Naive thymus-derived CD4-positive, alpha-beta T cell (primary cell): ENCODE measurements at regions of chr19 and their contacts with region 1.

Region 1: DNA sequence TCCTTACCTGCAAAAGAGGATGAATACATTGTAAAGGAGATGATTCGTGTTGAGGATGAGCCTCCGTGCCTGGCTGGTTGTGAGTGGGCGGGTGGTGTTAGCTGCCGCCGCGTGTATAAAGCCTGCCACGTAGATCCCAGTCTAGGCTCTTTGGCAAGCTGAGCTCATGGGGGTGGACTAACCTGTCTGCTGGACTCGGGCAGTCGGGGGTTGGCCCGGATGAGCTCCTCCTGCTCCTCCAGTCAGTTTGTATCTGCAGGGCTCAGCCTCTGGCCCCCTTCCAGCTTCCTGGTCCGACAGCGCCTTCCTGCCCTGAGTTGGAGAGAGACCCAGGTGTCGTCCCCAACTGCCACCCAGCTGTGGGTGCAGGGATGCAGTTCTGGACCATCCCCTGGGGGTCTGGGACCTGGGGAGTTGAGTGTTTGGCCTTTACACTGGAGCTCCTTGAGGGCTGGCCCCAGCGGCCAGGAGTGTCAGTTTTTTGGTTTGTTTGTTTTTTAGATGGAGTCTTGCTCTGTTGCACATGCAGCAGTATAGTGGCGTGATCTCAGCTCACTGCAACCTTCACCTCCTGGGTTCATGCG is 20.9 kb downstream of the TECR start:
- DNase-seq: no peak
- ATAC-seq: no peak
- H3K4me3 ChIP-seq: no peak overlapping the region
- H3K4me3 Mint-ChIP-seq: peak overlapping the region in 5 of 10 donors; percentile 8 to 76 (median 36)
- H3K27ac ChIP-seq: no peak overlapping the region
- H3K27ac Mint-ChIP-seq: peak overlapping the region; percentile 64 to 97 (median 84)
- H3K4me1 ChIP-seq: peaks cover 16 to 39% of the 10 kb centered on the region in 2 donors
- H3K4me1 Mint-ChIP-seq: peaks cover 28 to 70% (median 57%) of the 10 kb centered on the region in 7 donors
- H3K27me3 ChIP-seq: no peaks in the 10 kb centered on the region
- H3K27me3 Mint-ChIP-seq: no peaks in the 10 kb centered on the region

Region 2: DNA sequence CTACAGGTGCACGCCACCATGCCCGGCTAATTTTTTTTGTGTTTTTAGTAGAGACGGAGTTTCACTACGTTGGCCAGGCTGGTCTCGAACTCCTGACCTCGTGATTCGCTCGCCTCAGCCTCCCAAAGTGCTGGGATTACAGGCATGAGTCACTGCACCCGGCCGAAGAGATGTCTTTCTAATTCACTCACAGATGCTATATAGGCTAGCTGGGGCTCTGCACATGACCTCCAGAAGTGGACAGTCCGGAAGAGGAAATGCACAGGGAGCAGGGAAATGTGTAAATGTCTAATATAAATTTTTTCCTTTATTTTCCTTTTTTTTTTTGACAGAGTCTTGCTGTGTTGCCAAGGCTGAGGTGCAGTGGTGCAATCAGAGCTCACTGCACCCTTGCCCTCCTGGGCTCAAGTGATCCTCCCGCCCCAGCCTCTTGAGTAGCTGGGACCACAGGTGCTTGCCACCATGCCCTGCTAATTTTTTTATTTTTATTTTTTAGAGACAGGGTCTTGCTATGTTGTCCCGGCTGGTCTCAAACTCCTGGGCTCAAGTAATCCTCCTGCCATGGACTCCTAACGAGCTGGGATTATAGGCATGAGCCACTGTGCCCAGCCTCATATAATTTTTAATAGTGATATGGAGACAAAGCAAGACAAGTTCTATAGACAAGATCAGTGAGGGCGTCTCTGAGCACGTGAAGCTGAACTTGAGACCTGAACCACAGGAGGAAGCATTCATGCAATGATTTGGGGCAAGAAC is 62.7 kb before region 1 on chr19:
- CTCF ChIA-PET with region 1: interaction called, 6 read pairs
- POLR2A ChIA-PET with region 1: interaction called, 1,101 read pairs
- intact Hi-C with region 1: loop called in 1 of 2 experiments (anchors 2 kb)
- DNase-seq: no peak
- ATAC-seq: no peak
- H3K4me3 ChIP-seq: no peak overlapping the region
- H3K4me3 Mint-ChIP-seq: no peak overlapping the region
- H3K27ac ChIP-seq: no peak overlapping the region
- H3K27ac Mint-ChIP-seq: peak overlapping the region in 1 of 9 donors; percentile 48
- H3K4me1 ChIP-seq: peaks cover 0 to 9% of the 10 kb centered on the region in 2 donors
- H3K4me1 Mint-ChIP-seq: peaks cover 5 to 12% (median 11%) of the 10 kb centered on the region in 7 donors
- H3K27me3 ChIP-seq: no peaks in the 10 kb centered on the region
- H3K27me3 Mint-ChIP-seq: no peaks in the 10 kb centered on the region

Region 3: GRCh38 chr19:14496028-14496833 is 54.1 kb before region 1 on chr19 and contains the start of gene GIPC1:
- CTCF ChIA-PET with region 1: interaction called, 4 read pairs
- POLR2A ChIA-PET with region 1: interaction called, 1,101 read pairs
- intact Hi-C with region 1: no loop called
- DNase-seq: peak; percentile 80 to 92 (median 86)
- ATAC-seq: peak; percentile 94
- H3K4me3 ChIP-seq: peak within 1 kb of the TSS; percentile 74
- H3K4me3 Mint-ChIP-seq: peak within 1 kb of the TSS; percentile 74 to 91 (median 88)
- H3K27ac ChIP-seq: peak within 1 kb of the TSS; percentile 80
- H3K27ac Mint-ChIP-seq: peak within 1 kb of the TSS; percentile 79 to 93 (median 87)
- H3K4me1 ChIP-seq: peaks cover 12 to 14% of the 10 kb centered on the region in 2 donors
- H3K4me1 Mint-ChIP-seq: peaks cover 5 to 35% (median 28%) of the 10 kb centered on the region in 7 donors
- H3K27me3 ChIP-seq: no peaks in the 10 kb centered on the region
- H3K27me3 Mint-ChIP-seq: no peaks in the 10 kb centered on the region
- total RNA-seq, gene GIPC1: 21.3 to 45.4 (median 24.7) TPM

Region 4: GRCh38 chr19:14699641-14700040 is 149.3 kb after region 1 on chr19:
- CTCF ChIA-PET with region 1: no interaction called
- POLR2A ChIA-PET with region 1: no interaction called
- intact Hi-C with region 1: no loop called
- DNase-seq: no peak
- ATAC-seq: no peak
- H3K4me3 ChIP-seq: no peak overlapping the region
- H3K4me3 Mint-ChIP-seq: no peak overlapping the region
- H3K27ac ChIP-seq: no peak overlapping the region
- H3K27ac Mint-ChIP-seq: no peak overlapping the region
- H3K4me1 ChIP-seq: no peaks in the 10 kb centered on the region
- H3K4me1 Mint-ChIP-seq: peaks cover 0 to 2% (median 0%) of the 10 kb centered on the region in 7 donors
- H3K27me3 ChIP-seq: no peaks in the 10 kb centered on the region
- H3K27me3 Mint-ChIP-seq: no peaks in the 10 kb centered on the region